Psoas muscle (tissue), 8 donors: ENCODE measurements at regions of chr9 and their contacts with region 1.

Region 1: DNA sequence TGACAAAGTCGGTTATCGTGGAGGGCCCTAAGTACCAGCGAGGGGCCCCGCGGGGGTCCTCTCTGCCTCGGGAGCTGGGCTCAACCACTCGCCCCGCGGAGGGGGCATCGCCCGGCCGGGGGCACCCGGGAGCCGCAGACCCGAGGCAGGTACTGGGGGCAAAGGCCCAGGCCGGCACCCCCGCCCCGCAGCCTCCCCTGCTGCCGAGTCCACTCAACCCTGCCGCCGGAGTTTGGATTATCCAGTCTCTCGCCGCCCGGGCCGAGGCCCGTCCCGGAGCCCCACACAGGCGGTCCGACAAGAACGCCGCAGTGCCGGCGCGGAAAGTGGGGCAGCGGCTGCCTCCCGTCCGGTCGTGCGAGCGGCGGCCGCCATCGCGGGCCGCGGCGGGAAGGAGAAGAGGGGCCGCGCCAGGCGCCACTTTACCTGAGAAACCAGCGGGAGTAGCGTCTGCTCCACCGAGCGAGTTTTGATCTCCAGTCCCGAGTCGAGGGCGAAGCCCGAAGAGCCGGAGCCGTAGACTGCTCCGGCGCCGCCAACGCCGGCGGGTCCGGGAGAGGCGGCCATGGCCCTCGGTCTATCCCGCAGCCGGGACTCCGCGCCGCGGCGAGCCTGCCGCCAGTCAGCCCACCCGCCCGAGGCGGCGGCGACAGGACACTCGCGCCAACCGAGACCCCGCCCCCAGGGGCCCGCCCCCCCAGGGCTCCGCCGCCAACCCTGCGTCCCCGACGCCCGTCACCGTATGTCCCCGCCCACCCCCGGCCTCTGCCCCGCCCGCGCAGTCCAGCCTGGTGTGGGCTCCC is at the start of gene CTNNAL1:
- DNase-seq: peak; percentile 95 to 96
- ATAC-seq: peak; percentile 93 to 95 (median 94)
- H3K4me3 ChIP-seq: peak within 1 kb of the TSS; percentile 93
- H3K27ac ChIP-seq: peak within 1 kb of the TSS; percentile 97
- H3K4me1 ChIP-seq: peaks cover 43% of the 10 kb centered on the region
- H3K27me3 ChIP-seq: no peaks in the 10 kb centered on the region
- CTCF ChIP-seq: no peak
- total RNA-seq, gene CTNNAL1: 27.2 to 48.2 (median 32.5) TPM

Region 2: GRCh38 chr9:108933718-108934322 is 79.3 kb before region 1 on chr9 and contains the start of gene ELP1:
- intact Hi-C with region 1: loop called in 1 of 2 experiments (anchors 5 kb)
- DNase-seq: peak; percentile 92 to 96
- ATAC-seq: peak; percentile 92 to 94 (median 93)
- H3K4me3 ChIP-seq: peak within 1 kb of the TSS; percentile 97
- H3K27ac ChIP-seq: peak within 1 kb of the TSS; percentile 93
- H3K4me1 ChIP-seq: peaks cover 20% of the 10 kb centered on the region
- H3K27me3 ChIP-seq: no peaks in the 10 kb centered on the region
- CTCF ChIP-seq: no peak
- total RNA-seq, gene ELP1: 9.8 to 21.0 (median 17.9) TPM

Region 3: DNA sequence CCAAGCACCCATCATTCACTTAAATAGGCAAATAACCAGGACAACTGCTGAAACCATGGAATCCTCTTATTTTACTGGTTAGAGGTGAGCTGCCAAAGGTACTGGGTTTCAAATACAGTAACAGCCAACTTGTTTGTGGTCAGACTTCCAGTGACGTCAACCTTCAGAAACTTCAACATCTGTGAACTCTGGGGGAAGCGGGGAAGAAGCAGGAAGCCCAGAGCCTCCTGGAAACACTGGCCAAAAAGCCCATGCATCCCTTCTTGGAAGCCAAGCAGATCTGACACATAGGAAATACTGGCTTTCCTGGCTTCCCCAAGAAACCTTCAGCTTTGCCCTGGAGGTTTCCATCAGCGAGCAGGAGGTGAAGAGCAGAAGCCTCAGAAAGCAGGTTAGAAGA is 158.8 kb after region 1 on chr9:
- intact Hi-C with region 1: no loop called
- DNase-seq: no peak
- ATAC-seq: no peak
- H3K4me3 ChIP-seq: no peak overlapping the region
- H3K27ac ChIP-seq: no peak overlapping the region
- H3K4me1 ChIP-seq: no peaks in the 10 kb centered on the region
- H3K27me3 ChIP-seq: peaks cover 5 to 25% (median 6%) of the 10 kb centered on the region in 3 donors
- CTCF ChIP-seq: no peak

Region 4: GRCh38 chr9:109520478-109521132 is 507.5 kb after region 1 on chr9:
- intact Hi-C with region 1: no loop called
- DNase-seq: no peak
- ATAC-seq: peak; percentile 94 to 97 (median 95)
- H3K4me3 ChIP-seq: no peak overlapping the region
- H3K27ac ChIP-seq: no peak overlapping the region
- H3K4me1 ChIP-seq: peaks cover 4% of the 10 kb centered on the region
- H3K27me3 ChIP-seq: no peaks in the 10 kb centered on the region
- CTCF ChIP-seq: peak; percentile 90